ENCODE measurements at regions of chr15 and their contacts with region 1.

Region 1: DNA sequence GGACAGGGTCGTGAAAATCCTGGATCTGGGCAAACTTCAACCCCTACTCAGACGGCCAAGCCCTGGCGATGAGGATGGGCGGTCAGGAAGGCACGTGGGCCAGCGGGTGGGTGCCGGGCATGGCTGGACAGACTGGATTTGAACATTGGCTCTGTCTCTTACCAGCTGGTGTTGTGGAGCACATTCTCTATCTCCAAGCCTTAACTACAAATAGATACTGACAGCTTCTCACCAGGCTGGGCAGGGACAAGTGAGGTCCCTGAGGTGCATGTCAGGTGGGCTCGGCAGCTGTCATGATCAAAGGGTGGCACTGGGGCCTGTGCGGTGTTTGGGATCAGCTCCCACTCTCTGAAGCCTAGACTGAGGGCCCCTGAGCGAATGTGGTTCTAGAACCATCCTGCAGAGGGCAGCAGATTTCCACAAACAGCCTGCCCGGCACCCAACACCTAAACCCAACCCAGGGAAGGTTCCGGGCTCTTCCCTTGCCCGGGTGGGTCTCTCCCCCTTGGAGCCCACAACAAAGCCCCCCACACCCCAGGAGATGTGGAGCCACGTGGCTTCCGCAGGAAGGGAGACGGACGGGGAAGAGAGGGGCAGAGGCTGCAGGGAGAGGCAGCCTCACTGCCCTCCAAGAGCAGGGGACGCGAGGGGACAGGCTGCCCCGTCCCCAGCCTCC is 58.4 kb downstream of the RGMA start:
- DNase-seq: peak; percentile 68
- H3K4me3 Mint-ChIP-seq: no peak overlapping the region
- H3K27ac Mint-ChIP-seq: no peak overlapping the region
- H3K4me1 Mint-ChIP-seq: peaks cover 15% of the 10 kb centered on the region
- H3K27me3 Mint-ChIP-seq: no peaks in the 10 kb centered on the region

Region 2: DNA sequence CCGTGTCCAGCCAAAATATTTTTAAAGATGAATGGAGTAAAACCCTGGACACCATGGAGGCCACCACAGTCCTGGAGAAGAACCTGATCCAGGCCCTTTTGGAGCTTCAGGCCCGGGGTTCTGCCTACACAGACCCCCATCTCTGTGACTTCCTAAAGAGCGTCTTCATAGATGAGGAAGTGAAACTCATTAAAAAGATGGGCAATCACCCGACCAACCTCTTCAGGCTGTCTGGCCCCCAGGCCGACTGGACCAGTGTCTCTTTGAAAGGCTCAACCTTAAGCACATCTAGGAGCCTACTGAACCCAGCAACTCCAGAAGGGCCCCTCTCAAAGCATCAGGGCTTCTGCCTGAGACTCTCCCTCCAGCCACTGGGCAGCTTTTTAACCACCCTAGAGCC is 267.1 kb before region 1 on chr15:
- CTCF ChIA-PET with region 1: no interaction called
- POLR2A ChIA-PET with region 1: no interaction called
- DNase-seq: no peak
- H3K4me3 Mint-ChIP-seq: no peak overlapping the region
- H3K27ac Mint-ChIP-seq: no peak overlapping the region
- H3K4me1 Mint-ChIP-seq: no peaks in the 10 kb centered on the region
- H3K27me3 Mint-ChIP-seq: peaks cover 2% of the 10 kb centered on the region

Region 3: GRCh38 chr15:92989470-92989869 is 41.1 kb before region 1 on chr15:
- CTCF ChIA-PET with region 1: no interaction called
- POLR2A ChIA-PET with region 1: no interaction called
- DNase-seq: no peak
- H3K4me3 Mint-ChIP-seq: no peak overlapping the region
- H3K27ac Mint-ChIP-seq: no peak overlapping the region
- H3K4me1 Mint-ChIP-seq: peaks cover 2% of the 10 kb centered on the region
- H3K27me3 Mint-ChIP-seq: no peaks in the 10 kb centered on the region

Region 4: GRCh38 chr15:93018580-93018979 is 12.0 kb before region 1 on chr15:
- CTCF ChIA-PET with region 1: interaction called, 26 read pairs
- POLR2A ChIA-PET with region 1: interaction called, 3 read pairs
- DNase-seq: no peak
- H3K4me3 Mint-ChIP-seq: no peak overlapping the region
- H3K27ac Mint-ChIP-seq: no peak overlapping the region
- H3K4me1 Mint-ChIP-seq: peaks cover 61% of the 10 kb centered on the region
- H3K27me3 Mint-ChIP-seq: no peaks in the 10 kb centered on the region